B cell (primary cell): ENCODE measurements at regions of chr14 and their contacts with region 1.

Region 1: GRCh38 chr14:105020815-105021655 is at the start of gene CDCA4:
- DNase-seq: peak; percentile 99
- ATAC-seq: peak; percentile 85
- H3K4me3 ChIP-seq: peak within 1 kb of the TSS; percentile 60 to 75 (median 68)
- H3K4me3 Mint-ChIP-seq: peak within 1 kb of the TSS; percentile 94
- H3K27ac ChIP-seq: peak within 1 kb of the TSS; percentile 64 to 77
- H3K27ac Mint-ChIP-seq: peak within 1 kb of the TSS; percentile 92
- H3K4me1 ChIP-seq: peaks cover 17 to 38% of the 10 kb centered on the region in 2 donors
- H3K4me1 Mint-ChIP-seq: peaks cover 58% of the 10 kb centered on the region
- H3K27me3 ChIP-seq: no peaks in the 10 kb centered on the region
- H3K27me3 Mint-ChIP-seq: no peaks in the 10 kb centered on the region
- CTCF ChIP-seq: no peak
- total RNA-seq, gene CDCA4: 10.7 and 11.7 TPM in 2 replicates

Region 2: GRCh38 chr14:104689109-104689880 is 331.7 kb before region 1 on chr14 and contains the start of gene INF2:
- CTCF ChIA-PET with region 1: no interaction called
- POLR2A ChIA-PET with region 1: no interaction called
- intact Hi-C with region 1: no loop called
- DNase-seq: peak; percentile 79
- ATAC-seq: peak; percentile 81
- H3K4me3 ChIP-seq: peak within 1 kb of the TSS; percentile 31 to 87 (median 70)
- H3K4me3 Mint-ChIP-seq: peak within 1 kb of the TSS; percentile 78
- H3K27ac ChIP-seq: peak within 1 kb of the TSS; percentile 58 to 72
- H3K27ac Mint-ChIP-seq: peak within 1 kb of the TSS; percentile 65
- H3K4me1 ChIP-seq: peaks cover 41 to 85% of the 10 kb centered on the region in 2 donors
- H3K4me1 Mint-ChIP-seq: peaks cover 63% of the 10 kb centered on the region
- H3K27me3 ChIP-seq: no peaks in the 10 kb centered on the region
- H3K27me3 Mint-ChIP-seq: no peaks in the 10 kb centered on the region
- CTCF ChIP-seq: no peak
- total RNA-seq, gene INF2: 90.2 and 94.2 TPM in 2 replicates

Region 3: DNA sequence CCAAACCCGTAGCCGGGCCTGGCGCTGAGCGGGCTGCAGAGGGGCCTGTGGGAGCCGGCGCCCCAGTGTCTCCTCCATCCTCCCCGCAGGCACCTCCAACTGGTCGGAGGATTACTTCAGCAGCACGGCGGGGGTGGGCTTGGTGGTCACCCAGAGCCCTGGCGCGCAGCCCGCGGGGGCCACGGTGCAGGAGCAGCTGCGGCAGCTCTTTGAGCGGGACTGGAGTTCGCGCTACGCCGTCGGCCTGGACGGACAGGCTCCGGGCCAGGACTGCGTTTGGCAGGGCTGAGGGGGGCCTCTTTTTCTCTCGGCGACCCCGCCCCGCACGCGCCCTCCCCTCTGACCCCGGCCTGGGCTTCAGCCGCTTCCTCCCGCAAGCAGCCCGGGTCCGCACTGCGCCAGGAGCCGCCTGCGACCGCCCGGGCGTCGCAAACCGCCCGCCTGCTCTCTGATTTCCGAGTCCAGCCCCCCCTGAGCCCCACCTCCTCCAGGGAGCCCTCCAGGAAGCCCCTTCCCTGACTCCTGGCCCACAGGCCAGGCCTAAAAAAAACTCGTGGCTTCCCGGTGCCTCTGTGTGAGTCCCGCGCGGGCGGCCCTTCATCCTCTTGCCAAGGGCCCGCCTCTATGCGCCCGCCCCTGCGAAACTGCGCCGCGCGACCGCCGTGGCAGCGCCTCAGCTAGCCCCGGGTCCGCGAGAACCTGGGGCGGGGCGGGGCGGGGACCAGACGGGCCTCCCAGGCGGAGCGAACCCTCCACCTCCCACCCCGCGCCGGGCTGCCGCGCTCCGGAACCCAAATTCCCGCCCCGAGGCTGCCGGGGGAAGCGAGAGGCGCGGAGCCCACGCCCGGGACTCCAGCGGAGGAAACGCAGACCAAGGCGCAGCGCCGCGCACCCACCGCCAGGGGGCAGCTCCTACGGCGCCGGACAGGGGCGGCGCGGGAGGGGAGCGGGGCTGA is 88.1 kb before region 1 on chr14:
- CTCF ChIA-PET with region 1: no interaction called
- POLR2A ChIA-PET with region 1: no interaction called
- intact Hi-C with region 1: loop called (anchors 1 kb)
- DNase-seq: peak; percentile 86
- ATAC-seq: peak; percentile 94
- H3K4me3 ChIP-seq: peak overlapping the region in 3 of 5 experiments; percentile 39 to 54 (median 42)
- H3K4me3 Mint-ChIP-seq: peak overlapping the region; percentile 63
- H3K27ac ChIP-seq: no peak overlapping the region
- H3K27ac Mint-ChIP-seq: no peak overlapping the region
- H3K4me1 ChIP-seq: peaks cover 3 to 21% of the 10 kb centered on the region in 2 donors
- H3K4me1 Mint-ChIP-seq: peaks cover 18% of the 10 kb centered on the region
- H3K27me3 ChIP-seq: peaks cover 0 to 7% (median 2%) of the 10 kb centered on the region in 4 experiments
- H3K27me3 Mint-ChIP-seq: peaks cover 4% of the 10 kb centered on the region
- CTCF ChIP-seq: peak; percentile 69

Region 4: DNA sequence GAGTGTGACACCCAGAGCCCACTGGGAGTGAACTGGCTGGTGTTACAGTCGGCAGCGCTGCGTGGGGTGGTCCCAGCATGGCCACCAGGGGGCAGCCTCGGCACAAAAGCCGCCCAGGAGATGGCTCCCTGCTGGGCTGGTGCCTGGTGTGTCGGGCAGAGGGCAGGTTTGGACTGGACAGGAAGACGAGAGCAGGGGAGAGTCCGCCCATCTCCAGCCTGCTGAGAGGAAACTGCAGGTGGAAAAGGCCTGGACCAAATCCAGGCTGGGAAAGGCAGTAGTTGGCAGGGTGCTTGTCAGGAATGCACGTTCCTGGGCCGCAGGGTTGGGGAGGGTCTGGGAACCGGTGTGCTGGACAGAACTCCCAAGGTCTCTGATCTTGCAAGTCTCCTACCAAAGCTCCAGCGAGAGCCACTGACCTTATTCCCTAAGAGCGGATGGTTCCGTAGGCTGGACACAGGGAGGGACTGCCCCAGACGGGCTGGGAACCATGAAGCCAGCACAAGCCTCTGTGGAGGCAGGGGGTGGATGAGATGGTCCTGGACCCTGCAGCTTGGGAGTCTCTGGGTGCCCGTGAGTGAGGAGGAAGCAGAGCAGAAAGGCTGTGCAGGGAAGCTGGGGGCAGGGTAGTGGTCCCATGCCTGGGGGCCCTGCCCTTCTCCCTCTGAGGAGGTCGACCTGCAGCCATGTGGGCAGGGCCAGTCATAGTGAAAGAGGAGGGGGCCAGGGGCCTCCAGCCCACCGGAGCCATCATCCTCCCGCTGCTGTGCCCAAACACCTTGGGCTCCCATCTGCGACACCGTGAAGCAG is 44.6 kb before region 1 on chr14:
- CTCF ChIA-PET with region 1: interaction called, 5 read pairs
- POLR2A ChIA-PET with region 1: interaction called, 3 read pairs
- intact Hi-C with region 1: loop called (anchors 2 kb)
- DNase-seq: peak; percentile 87
- ATAC-seq: peak; percentile 77
- H3K4me3 ChIP-seq: no peak overlapping the region
- H3K4me3 Mint-ChIP-seq: peak overlapping the region; percentile 82
- H3K27ac ChIP-seq: no peak overlapping the region
- H3K27ac Mint-ChIP-seq: peak overlapping the region; percentile 38
- H3K4me1 ChIP-seq: peaks cover 20 to 24% of the 10 kb centered on the region in 2 donors
- H3K4me1 Mint-ChIP-seq: peaks cover 12% of the 10 kb centered on the region
- H3K27me3 ChIP-seq: peaks cover 0 to 32% (median 15%) of the 10 kb centered on the region in 4 experiments
- H3K27me3 Mint-ChIP-seq: peaks cover 29% of the 10 kb centered on the region
- CTCF ChIP-seq: peak; percentile 91

Region 5: GRCh38 chr14:104985675-104986525 is 35.1 kb before region 1 on chr14 and contains the start of gene CLBA1:
- CTCF ChIA-PET with region 1: interaction called, 4 read pairs
- POLR2A ChIA-PET with region 1: interaction called, 14 read pairs
- intact Hi-C with region 1: loop called (anchors 1 kb)
- DNase-seq: peak; percentile 95
- ATAC-seq: peak; percentile 92
- H3K4me3 ChIP-seq: peak within 1 kb of the TSS in 4 of 5 experiments; percentile 47 to 78 (median 62)
- H3K4me3 Mint-ChIP-seq: peak within 1 kb of the TSS; percentile 79
- H3K27ac ChIP-seq: peak within 1 kb of the TSS in 1 of 2 donors; percentile 73
- H3K27ac Mint-ChIP-seq: peak within 1 kb of the TSS; percentile 67
- H3K4me1 ChIP-seq: peaks cover 7 to 13% of the 10 kb centered on the region in 2 donors
- H3K4me1 Mint-ChIP-seq: peaks cover 7% of the 10 kb centered on the region
- H3K27me3 ChIP-seq: peaks cover 0 to 11% (median 5%) of the 10 kb centered on the region in 4 experiments
- H3K27me3 Mint-ChIP-seq: peaks cover 4% of the 10 kb centered on the region
- CTCF ChIP-seq: no peak
- total RNA-seq, gene CLBA1: 5.3 and 5.5 TPM in 2 replicates

Region 6: GRCh38 chr14:105034314-105035039 is 13.4 kb after region 1 on chr14:
- CTCF ChIA-PET with region 1: interaction called, 11 read pairs
- POLR2A ChIA-PET with region 1: interaction called, 3 read pairs
- intact Hi-C with region 1: no loop called
- DNase-seq: no peak
- ATAC-seq: no peak
- H3K4me3 ChIP-seq: no peak overlapping the region
- H3K4me3 Mint-ChIP-seq: peak overlapping the region; percentile 37
- H3K27ac ChIP-seq: no peak overlapping the region
- H3K27ac Mint-ChIP-seq: peak overlapping the region; percentile 91
- H3K4me1 ChIP-seq: peaks cover 5 to 6% of the 10 kb centered on the region in 2 donors
- H3K4me1 Mint-ChIP-seq: peaks cover 13% of the 10 kb centered on the region
- H3K27me3 ChIP-seq: no peaks in the 10 kb centered on the region
- H3K27me3 Mint-ChIP-seq: no peaks in the 10 kb centered on the region
- CTCF ChIP-seq: no peak

Region 7: DNA sequence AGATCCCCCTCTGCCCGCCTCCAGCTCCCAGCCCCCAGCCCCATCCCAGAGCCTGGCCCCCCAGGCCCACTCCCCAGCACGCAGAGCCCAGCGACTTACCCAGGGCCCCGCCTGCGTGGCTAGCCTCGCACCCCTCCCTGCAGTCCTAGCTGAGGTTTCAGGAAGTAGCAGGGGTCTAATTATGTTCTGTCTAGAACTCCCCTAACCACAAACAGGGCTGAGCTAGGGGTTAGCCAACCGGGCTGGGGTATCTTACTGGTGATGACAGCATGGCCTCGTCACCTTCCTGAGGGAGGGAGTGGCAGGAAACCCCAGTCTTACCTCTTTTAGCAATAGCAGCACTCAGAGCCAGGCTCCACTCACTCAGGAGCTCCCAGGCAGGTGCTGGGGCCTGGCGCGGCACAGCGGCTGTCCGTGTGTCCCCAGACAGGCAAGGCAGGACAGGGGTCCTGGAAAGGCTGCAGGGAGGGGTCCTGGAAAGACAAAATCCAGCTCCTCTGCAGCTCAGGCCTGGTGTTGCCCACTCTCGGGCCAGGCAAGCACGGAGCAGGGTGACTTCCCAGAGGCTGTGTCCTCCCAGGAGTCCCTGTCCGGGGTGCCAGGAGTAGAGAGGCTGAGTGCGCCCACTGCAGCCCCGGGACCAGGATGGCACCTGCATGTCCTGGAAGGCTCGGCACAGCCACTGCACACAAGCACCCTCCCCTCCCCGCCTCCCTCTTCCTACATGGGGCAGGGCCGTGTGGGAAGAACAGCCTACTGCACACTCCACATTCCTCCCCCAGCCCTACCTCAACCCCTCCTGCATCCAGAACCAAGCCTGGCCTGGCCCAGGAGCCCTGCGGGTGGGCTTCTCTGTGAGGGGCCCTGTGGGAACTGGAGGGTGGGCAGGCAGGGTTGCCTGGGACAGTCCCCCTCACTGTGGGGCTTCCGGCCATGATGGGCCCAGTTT is 44.5 kb after region 1 on chr14 and contains the start of gene GPR132:
- CTCF ChIA-PET with region 1: interaction called, 4 read pairs
- POLR2A ChIA-PET with region 1: interaction called, 3 read pairs
- intact Hi-C with region 1: loop called (anchors 1 kb)
- DNase-seq: peak; percentile 96
- ATAC-seq: peak; percentile 78
- H3K4me3 ChIP-seq: peak within 1 kb of the TSS; percentile 81 to 100 (median 91)
- H3K4me3 Mint-ChIP-seq: peak within 1 kb of the TSS; percentile 87
- H3K27ac ChIP-seq: peak within 1 kb of the TSS; percentile 93 to 98
- H3K27ac Mint-ChIP-seq: peak within 1 kb of the TSS; percentile 98
- H3K4me1 ChIP-seq: peaks cover 79 to 95% of the 10 kb centered on the region in 2 donors
- H3K4me1 Mint-ChIP-seq: peaks cover 82% of the 10 kb centered on the region
- H3K27me3 ChIP-seq: no peaks in the 10 kb centered on the region
- H3K27me3 Mint-ChIP-seq: no peaks in the 10 kb centered on the region
- CTCF ChIP-seq: no peak
- total RNA-seq, gene GPR132: 54.5 and 63.2 TPM in 2 replicates